ENCODE measurements at regions of chr10 and their contacts with region 1.

Region 1: GRCh38 chr10:93680412-93681047 is 21.9 kb downstream of the FRA10AC1 start:
- DNase-seq: peak; percentile 40 to 69
- ATAC-seq: peak; percentile 70 to 80; a peak in 5 of 6 replicates
- H3K4me3 ChIP-seq: no peak overlapping the region
- H3K27ac ChIP-seq: no peak overlapping the region
- H3K4me1 ChIP-seq: no peaks in the 10 kb centered on the region
- CTCF ChIP-seq: peak; percentile 89
- EP300 ChIP-seq: no peak
- POLR2A ChIP-seq: no peak
- RAD21 ChIP-seq: peak; percentile 91 to 92

Region 2: GRCh38 chr10:93541402-93542357 is 138.8 kb before region 1 on chr10:
- CTCF ChIA-PET with region 1: interaction called, 38 read pairs
- POLR2A ChIA-PET with region 1: no interaction called
- DNase-seq: peak in 1 of 2 experiments; percentile 56
- ATAC-seq: peak; percentile 97 to 98
- H3K4me3 ChIP-seq: no peak overlapping the region
- H3K27ac ChIP-seq: no peak overlapping the region; a peak in 1 of 6 replicates
- H3K4me1 ChIP-seq: peaks cover 16% of the 10 kb centered on the region
- CTCF ChIP-seq: peak; percentile 86
- EP300 ChIP-seq: no peak
- POLR2A ChIP-seq: no peak
- RAD21 ChIP-seq: peak; percentile 76

Region 3: DNA sequence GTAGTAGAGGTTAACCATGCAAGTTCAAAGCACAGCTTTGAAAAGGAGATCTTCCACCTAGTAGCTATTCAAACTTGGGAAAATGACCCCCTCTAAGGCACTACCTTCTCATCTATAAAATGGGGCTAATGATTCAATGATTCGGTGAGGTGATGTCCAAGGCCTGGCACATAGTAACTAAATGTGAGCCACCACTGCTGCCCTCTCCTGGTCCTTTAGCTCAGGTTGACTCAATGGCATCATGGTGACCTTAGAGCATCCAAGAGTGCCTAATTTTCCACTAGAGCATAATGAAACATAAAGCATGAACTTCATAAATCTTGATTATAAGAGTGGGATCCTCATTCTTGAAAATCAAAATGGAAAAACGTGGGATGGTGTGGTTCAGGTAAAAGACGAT is 296.9 kb after region 1 on chr10:
- CTCF ChIA-PET with region 1: no interaction called
- POLR2A ChIA-PET with region 1: no interaction called
- DNase-seq: no peak
- ATAC-seq: no peak
- H3K4me3 ChIP-seq: no peak overlapping the region
- H3K27ac ChIP-seq: no peak overlapping the region
- H3K4me1 ChIP-seq: no peaks in the 10 kb centered on the region
- CTCF ChIP-seq: no peak
- EP300 ChIP-seq: no peak
- POLR2A ChIP-seq: no peak
- RAD21 ChIP-seq: peak in 1 of 2 experiments; percentile 17; a peak in 1 of 5 replicates